ENCODE measurements at regions of chr3 and their contacts with region 1.

Region 1: GRCh38 chr3:38662544-38662943 is 13.1 kb upstream of the SCN5A start:
- DNase-seq: peak; percentile 42
- ATAC-seq: peak; percentile 96
- H3K4me3 Mint-ChIP-seq: no peak overlapping the region
- H3K27ac Mint-ChIP-seq: no peak overlapping the region
- H3K4me1 Mint-ChIP-seq: peaks cover 8% of the 10 kb centered on the region
- H3K27me3 Mint-ChIP-seq: peaks cover 7% of the 10 kb centered on the region
- CTCF ChIP-seq: peak; percentile 61

Region 2: GRCh38 chr3:38496131-38496910 is 166.2 kb before region 1 on chr3 and contains the start of gene EXOG:
- CTCF ChIA-PET with region 1: interaction called, 25 read pairs
- POLR2A ChIA-PET with region 1: no interaction called
- DNase-seq: peak; percentile 96
- ATAC-seq: peak; percentile 93
- H3K4me3 Mint-ChIP-seq: peak within 1 kb of the TSS; percentile 93
- H3K27ac Mint-ChIP-seq: peak within 1 kb of the TSS; percentile 68
- H3K4me1 Mint-ChIP-seq: peaks cover 5% of the 10 kb centered on the region
- H3K27me3 Mint-ChIP-seq: no peaks in the 10 kb centered on the region
- CTCF ChIP-seq: peak; percentile 71
- total RNA-seq, gene EXOG: 12.2 to 13.7 TPM (median 12.9 TPM) in 3 replicates

Region 3: DNA sequence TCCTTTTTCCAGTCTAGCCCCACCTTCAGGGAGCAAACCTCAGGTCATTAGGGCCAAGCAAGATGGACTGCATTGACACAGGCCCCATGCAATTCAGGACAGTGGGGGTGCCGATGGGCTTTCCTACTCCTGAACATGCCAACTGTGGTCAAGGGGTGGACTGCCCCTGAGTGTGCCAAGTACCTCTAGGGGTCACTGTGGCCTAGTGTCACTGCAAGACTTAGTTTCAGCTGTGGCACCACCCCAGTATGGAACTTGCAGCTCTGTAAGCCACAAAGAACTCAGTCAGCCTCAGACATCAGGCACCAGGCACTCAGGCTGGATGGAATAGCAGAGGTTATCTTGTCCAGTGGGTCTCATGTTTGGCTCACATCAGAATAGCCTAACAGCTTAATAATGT is 134.1 kb before region 1 on chr3:
- CTCF ChIA-PET with region 1: interaction called, 12 read pairs
- POLR2A ChIA-PET with region 1: no interaction called
- DNase-seq: peak; percentile 53
- ATAC-seq: peak; percentile 88
- H3K4me3 Mint-ChIP-seq: no peak overlapping the region
- H3K27ac Mint-ChIP-seq: peak overlapping the region; percentile 29; the same call in 1 of the 2 replicates
- H3K4me1 Mint-ChIP-seq: peaks cover 21% of the 10 kb centered on the region
- H3K27me3 Mint-ChIP-seq: no peaks in the 10 kb centered on the region
- CTCF ChIP-seq: no peak

Region 4: GRCh38 chr3:38725726-38726419 is 63.3 kb after region 1 on chr3:
- CTCF ChIA-PET with region 1: no interaction called
- POLR2A ChIA-PET with region 1: no interaction called
- DNase-seq: no peak
- ATAC-seq: no peak
- H3K4me3 Mint-ChIP-seq: no peak overlapping the region
- H3K27ac Mint-ChIP-seq: no peak overlapping the region
- H3K4me1 Mint-ChIP-seq: peaks cover 15% of the 10 kb centered on the region
- H3K27me3 Mint-ChIP-seq: no peaks in the 10 kb centered on the region
- CTCF ChIP-seq: no peak

Region 5: DNA sequence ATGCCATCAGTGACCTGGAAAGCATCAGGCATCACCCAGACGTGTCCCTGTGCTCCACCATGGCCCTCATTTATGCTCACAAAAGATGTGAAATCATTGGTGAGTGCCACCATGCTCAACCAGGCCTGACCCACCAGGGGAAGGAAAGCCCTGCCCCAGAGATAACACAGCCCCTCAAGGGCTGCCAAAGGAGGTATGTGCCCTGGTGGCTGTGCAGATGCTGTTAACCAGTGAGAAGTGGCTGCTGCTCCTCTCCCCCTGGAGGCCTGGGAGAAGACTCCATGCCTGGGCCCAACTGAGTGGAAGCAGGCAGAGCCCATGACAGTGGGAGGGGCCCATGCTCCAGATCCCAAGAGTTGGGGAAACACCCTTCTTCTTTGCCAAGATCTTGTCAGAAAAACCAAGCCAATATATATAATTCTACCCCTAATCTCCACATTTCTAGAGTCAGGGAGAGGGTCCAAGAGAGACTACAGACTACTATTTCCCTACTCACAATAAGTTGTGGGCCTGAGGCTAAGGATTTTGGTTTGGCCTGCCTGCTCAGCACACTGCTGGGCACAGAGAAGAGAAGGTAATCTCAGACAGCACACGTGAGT is 447.6 kb after region 1 on chr3:
- CTCF ChIA-PET with region 1: no interaction called
- POLR2A ChIA-PET with region 1: no interaction called
- DNase-seq: no peak
- ATAC-seq: peak; percentile 10
- H3K4me3 Mint-ChIP-seq: no peak overlapping the region
- H3K27ac Mint-ChIP-seq: no peak overlapping the region
- H3K4me1 Mint-ChIP-seq: peaks cover 22% of the 10 kb centered on the region
- H3K27me3 Mint-ChIP-seq: peaks cover 16% of the 10 kb centered on the region
- CTCF ChIP-seq: no peak

Measured in WTC11 (cell line).